Naive thymus-derived CD8-positive, alpha-beta T cell (primary cell): ENCODE measurements at regions of chr12 and their contacts with region 1.

Region 1: GRCh38 chr12:31959161-31959700 is at the start of gene RESF1:
- DNase-seq: peak; percentile 68 to 92 (median 84)
- ATAC-seq: peak; percentile 76 to 80
- H3K4me3 Mint-ChIP-seq: peak within 1 kb of the TSS; percentile 93 to 99 (median 97)
- H3K27ac Mint-ChIP-seq: peak within 1 kb of the TSS; percentile 94 to 99 (median 97)
- H3K4me1 Mint-ChIP-seq: peaks cover 36 to 80% (median 69%) of the 10 kb centered on the region in 4 donors
- H3K27me3 Mint-ChIP-seq: no peaks in the 10 kb centered on the region
- polyA plus RNA-seq, gene RESF1: 129 to 237 (median 154) TPM

Region 2: DNA sequence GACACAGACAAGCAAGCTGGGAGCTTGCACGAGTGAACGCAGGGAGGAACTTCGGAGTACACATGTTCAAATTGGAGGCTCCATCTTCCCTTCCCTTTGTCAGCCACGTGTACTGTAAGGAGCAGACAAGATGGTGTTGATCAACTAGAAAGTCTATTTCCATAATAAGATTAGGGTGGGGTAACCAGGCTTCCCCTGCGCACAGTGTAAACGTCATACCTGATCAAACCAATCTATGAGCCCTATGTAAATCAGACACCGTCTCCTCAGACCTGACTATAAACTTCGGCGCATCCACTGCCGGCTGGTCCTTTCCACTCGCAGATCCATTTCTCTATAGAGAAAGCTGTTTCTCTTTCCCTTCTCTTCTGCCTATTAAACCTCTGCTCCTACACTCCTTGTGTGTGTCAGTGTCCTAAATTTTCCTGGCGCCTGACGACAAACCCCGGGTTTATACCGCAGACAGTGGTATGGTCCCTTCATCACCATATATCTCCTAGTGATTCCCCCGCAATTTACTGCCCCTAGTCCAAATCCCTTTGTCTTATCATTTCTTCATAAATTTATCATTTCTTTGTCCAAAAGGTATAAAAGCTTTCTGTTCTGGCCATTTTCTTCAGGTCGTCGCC is 307.2 kb before region 1 on chr12:
- POLR2A ChIA-PET with region 1: interaction called, 14 read pairs
- DNase-seq: no peak
- ATAC-seq: no peak
- H3K4me3 Mint-ChIP-seq: peak overlapping the region in 5 of 10 donors; percentile 18 to 55 (median 48)
- H3K27ac Mint-ChIP-seq: peak overlapping the region in 9 of 10 donors; percentile 42 to 95 (median 90)
- H3K4me1 Mint-ChIP-seq: peaks cover 10 to 14% (median 11%) of the 10 kb centered on the region in 4 donors
- H3K27me3 Mint-ChIP-seq: no peaks in the 10 kb centered on the region

Region 3: DNA sequence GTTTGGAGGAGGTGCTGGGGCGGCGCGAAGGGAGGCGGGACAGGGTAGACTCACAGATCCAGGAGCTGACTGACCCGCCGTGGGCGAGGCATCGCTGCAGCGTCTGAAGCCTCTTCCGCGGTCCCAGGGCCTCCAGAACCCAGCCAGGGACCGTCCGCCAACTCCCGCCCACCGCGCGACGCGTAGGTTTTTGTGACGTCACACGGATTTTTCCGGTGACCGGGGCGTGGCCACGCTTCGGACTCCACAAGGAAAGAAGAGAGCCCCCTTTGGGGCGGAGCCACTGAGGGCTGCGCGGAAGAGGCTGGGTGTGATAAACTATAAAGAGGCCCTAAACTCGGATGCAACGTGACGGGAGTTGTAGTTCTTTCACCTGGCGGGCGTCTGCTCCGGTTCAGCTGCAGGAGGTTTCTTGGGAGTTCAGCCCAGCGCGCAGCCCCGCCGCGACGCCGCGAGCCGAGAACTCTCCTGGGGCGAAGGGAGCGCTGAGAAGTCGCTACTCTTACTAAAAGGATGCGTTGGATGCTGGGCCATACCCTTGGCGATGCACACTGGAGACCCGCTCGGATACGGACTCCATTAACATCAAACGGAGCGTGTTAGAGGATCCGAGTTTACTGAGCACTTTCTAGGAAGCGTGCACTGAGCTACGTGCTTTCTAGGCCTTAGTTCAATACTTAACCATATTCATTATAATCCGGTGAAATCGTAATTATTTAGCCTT is 230.2 kb before region 1 on chr12 and contains the start of gene AMN1:
- POLR2A ChIA-PET with region 1: interaction called, 88 read pairs
- DNase-seq: peak; percentile 85 to 100 (median 98)
- ATAC-seq: peak; percentile 89 to 91
- H3K4me3 Mint-ChIP-seq: peak within 1 kb of the TSS; percentile 95 to 100 (median 99)
- H3K27ac Mint-ChIP-seq: peak within 1 kb of the TSS; percentile 96 to 100 (median 99)
- H3K4me1 Mint-ChIP-seq: peaks cover 26 to 77% (median 59%) of the 10 kb centered on the region in 4 donors
- H3K27me3 Mint-ChIP-seq: no peaks in the 10 kb centered on the region
- polyA plus RNA-seq, gene AMN1: 8.9 to 16.7 (median 12.8) TPM

Region 4: GRCh38 chr12:31797230-31797872 is 161.9 kb before region 1 on chr12:
- POLR2A ChIA-PET with region 1: interaction called, 96 read pairs
- DNase-seq: peak in 6 of 10 donors; percentile 10 to 43 (median 32)
- ATAC-seq: peak; percentile 76 to 83
- H3K4me3 Mint-ChIP-seq: peak overlapping the region; percentile 52 to 83 (median 72)
- H3K27ac Mint-ChIP-seq: peak overlapping the region; percentile 82 to 96 (median 90)
- H3K4me1 Mint-ChIP-seq: peaks cover 24 to 48% (median 41%) of the 10 kb centered on the region in 4 donors
- H3K27me3 Mint-ChIP-seq: no peaks in the 10 kb centered on the region

Region 5: GRCh38 chr12:31874961-31875608 is 84.1 kb before region 1 on chr12:
- POLR2A ChIA-PET with region 1: interaction called, 29 read pairs
- DNase-seq: peak; percentile 35 to 85 (median 70)
- ATAC-seq: peak; percentile 92 to 98
- H3K4me3 Mint-ChIP-seq: peak overlapping the region; percentile 62 to 85 (median 78)
- H3K27ac Mint-ChIP-seq: peak overlapping the region; percentile 96 to 99 (median 98)
- H3K4me1 Mint-ChIP-seq: peaks cover 22 to 71% (median 53%) of the 10 kb centered on the region in 4 donors
- H3K27me3 Mint-ChIP-seq: no peaks in the 10 kb centered on the region

Region 6: GRCh38 chr12:31896514-31897039 is 62.7 kb before region 1 on chr12:
- POLR2A ChIA-PET with region 1: interaction called, 112 read pairs
- DNase-seq: peak; percentile 39 to 95 (median 86)
- ATAC-seq: peak; percentile 96 to 97
- H3K4me3 Mint-ChIP-seq: peak overlapping the region; percentile 55 to 87 (median 80)
- H3K27ac Mint-ChIP-seq: peak overlapping the region; percentile 91 to 99 (median 97)
- H3K4me1 Mint-ChIP-seq: peaks cover 21 to 76% (median 62%) of the 10 kb centered on the region in 4 donors
- H3K27me3 Mint-ChIP-seq: peaks cover 0 to 1% (median 0%) of the 10 kb centered on the region in 5 donors

Region 7: GRCh38 chr12:31973818-31974217 is 14.6 kb after region 1 on chr12:
- POLR2A ChIA-PET with region 1: interaction called, 33 read pairs
- DNase-seq: no peak
- ATAC-seq: no peak
- H3K4me3 Mint-ChIP-seq: no peak overlapping the region
- H3K27ac Mint-ChIP-seq: peak overlapping the region in 6 of 10 donors; percentile 37 to 68 (median 47)
- H3K4me1 Mint-ChIP-seq: peaks cover 6 to 65% (median 36%) of the 10 kb centered on the region in 4 donors
- H3K27me3 Mint-ChIP-seq: no peaks in the 10 kb centered on the region